Activated CD4-positive, alpha-beta T cell treated with anti-CD3 and anti-CD28 coated beads for 36 hours (primary cell): ENCODE measurements at regions of chr15 and their contacts with region 1.

Region 1: GRCh38 chr15:76973362-76973743 is 21.6 kb upstream of the PSTPIP1 start:
- DNase-seq: peak; percentile 86
- ATAC-seq: peak; percentile 81
- H3K4me3 Mint-ChIP-seq: no peak overlapping the region
- H3K27ac Mint-ChIP-seq: no peak overlapping the region
- H3K4me1 Mint-ChIP-seq: peaks cover 17% of the 10 kb centered on the region
- H3K27me3 Mint-ChIP-seq: no peaks in the 10 kb centered on the region

Region 2: GRCh38 chr15:76987926-76988860 is 14.8 kb after region 1 on chr15:
- CTCF ChIA-PET with region 1: interaction called, 33 read pairs
- POLR2A ChIA-PET with region 1: no interaction called
- intact Hi-C with region 1: no loop called
- DNase-seq: peak; percentile 89
- ATAC-seq: peak; percentile 90
- H3K4me3 Mint-ChIP-seq: peak overlapping the region; percentile 56
- H3K27ac Mint-ChIP-seq: peak overlapping the region; percentile 98
- H3K4me1 Mint-ChIP-seq: peaks cover 48% of the 10 kb centered on the region
- H3K27me3 Mint-ChIP-seq: no peaks in the 10 kb centered on the region

Region 3: GRCh38 chr15:77024271-77025082 is 51.1 kb after region 1 on chr15:
- CTCF ChIA-PET with region 1: interaction called, 87 read pairs
- POLR2A ChIA-PET with region 1: interaction called, 3 read pairs
- intact Hi-C with region 1: loop called (anchors 1 to 5 kb)
- DNase-seq: peak; percentile 82
- ATAC-seq: no peak
- H3K4me3 Mint-ChIP-seq: no peak overlapping the region
- H3K27ac Mint-ChIP-seq: peak overlapping the region; percentile 76
- H3K4me1 Mint-ChIP-seq: peaks cover 48% of the 10 kb centered on the region
- H3K27me3 Mint-ChIP-seq: no peaks in the 10 kb centered on the region

Region 4: DNA sequence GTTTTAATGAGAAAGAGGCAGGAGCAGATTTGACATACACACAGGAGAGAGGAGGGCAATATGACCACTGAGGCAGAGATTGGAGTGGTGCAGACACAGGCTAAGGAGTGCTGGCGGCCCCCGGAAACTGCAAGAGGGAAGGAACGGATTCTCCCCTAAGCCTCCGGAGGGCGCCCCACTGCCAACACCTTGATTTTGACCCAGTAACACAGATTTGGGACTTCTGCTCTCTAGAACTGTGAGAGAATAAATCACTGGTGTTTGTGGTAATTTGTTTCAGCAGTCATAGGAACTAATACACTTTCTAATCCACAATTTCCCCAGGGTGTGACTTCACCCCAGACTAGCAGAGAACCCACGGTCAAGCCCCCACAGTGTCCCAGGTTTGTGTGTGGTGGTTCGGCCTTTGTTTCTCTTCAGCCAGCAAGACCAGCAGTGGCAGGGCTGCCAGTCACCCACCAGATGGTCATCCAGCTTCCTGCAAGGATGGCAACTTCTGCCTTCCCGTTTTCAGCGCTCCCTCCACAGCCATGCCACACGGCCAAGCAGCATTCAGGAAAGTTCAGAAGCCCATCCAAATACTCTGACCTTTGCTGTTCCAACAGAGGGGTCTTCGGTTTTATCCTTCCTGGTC is 121.2 kb after region 1 on chr15:
- CTCF ChIA-PET with region 1: interaction called, 7 read pairs
- POLR2A ChIA-PET with region 1: no interaction called
- intact Hi-C with region 1: loop called (anchors 5 kb)
- DNase-seq: peak; percentile 43
- ATAC-seq: no peak
- H3K4me3 Mint-ChIP-seq: no peak overlapping the region
- H3K27ac Mint-ChIP-seq: no peak overlapping the region
- H3K4me1 Mint-ChIP-seq: no peaks in the 10 kb centered on the region
- H3K27me3 Mint-ChIP-seq: no peaks in the 10 kb centered on the region

Region 5: GRCh38 chr15:77496710-77497103 is 523.4 kb after region 1 on chr15:
- CTCF ChIA-PET with region 1: interaction called, 7 read pairs
- POLR2A ChIA-PET with region 1: no interaction called
- intact Hi-C with region 1: loop called (anchors 1 to 5 kb)
- DNase-seq: peak; percentile 86
- ATAC-seq: peak; percentile 66
- H3K4me3 Mint-ChIP-seq: no peak overlapping the region
- H3K27ac Mint-ChIP-seq: no peak overlapping the region
- H3K4me1 Mint-ChIP-seq: peaks cover 17% of the 10 kb centered on the region
- H3K27me3 Mint-ChIP-seq: no peaks in the 10 kb centered on the region

Region 6: DNA sequence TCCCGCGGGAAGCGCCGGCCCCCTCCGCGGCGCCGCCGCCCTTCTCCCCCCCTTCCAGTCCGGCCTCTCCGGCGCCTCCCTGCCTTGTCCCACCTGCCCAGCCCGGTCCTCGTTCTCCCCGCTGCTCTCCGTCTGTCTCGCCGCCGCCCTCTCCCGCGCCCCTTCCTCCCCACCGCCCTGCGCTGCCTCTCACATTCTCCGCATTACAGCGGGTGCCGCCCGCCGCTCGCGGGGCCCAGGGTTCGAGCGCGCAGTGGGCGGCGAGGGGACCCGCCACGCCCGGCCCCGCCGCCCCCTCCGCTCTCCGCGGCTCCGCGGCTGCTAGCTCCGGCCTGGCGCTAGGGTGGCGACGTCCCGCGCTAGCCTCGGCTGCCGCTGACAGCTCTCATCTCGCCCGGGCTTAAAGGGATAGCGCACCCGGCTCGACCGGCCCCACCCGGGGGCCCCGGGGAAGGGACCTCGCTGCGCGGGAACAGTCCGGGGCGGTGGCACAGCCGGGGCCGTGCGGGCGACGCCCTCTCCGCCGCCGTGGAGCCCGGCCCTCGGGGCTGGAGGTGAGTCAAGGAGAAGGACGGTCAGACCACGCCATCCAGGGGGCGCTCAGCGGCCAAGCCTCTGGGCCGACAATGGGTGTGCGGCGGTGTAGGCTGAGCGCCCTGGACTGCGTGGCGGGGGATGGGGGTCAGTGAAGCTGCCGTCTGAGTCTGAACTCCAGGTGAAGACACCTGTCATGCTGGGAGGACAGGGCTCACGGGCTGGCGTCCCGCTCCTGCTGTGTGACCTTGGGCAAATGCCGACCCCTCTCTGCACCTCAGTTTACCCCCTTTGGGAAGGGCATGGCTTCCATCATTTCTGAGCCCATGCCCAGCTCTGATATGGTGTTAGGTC is 846.7 kb after region 1 on chr15:
- CTCF ChIA-PET with region 1: no interaction called
- POLR2A ChIA-PET with region 1: no interaction called
- intact Hi-C with region 1: no loop called
- DNase-seq: peak; percentile 18
- ATAC-seq: peak; percentile 16
- H3K4me3 Mint-ChIP-seq: no peak overlapping the region
- H3K27ac Mint-ChIP-seq: no peak overlapping the region
- H3K4me1 Mint-ChIP-seq: no peaks in the 10 kb centered on the region
- H3K27me3 Mint-ChIP-seq: peaks cover 42% of the 10 kb centered on the region